Prostate gland (tissue), 2 donors: ENCODE measurements at regions of chr15 and their contacts with region 1.

Region 1: GRCh38 chr15:64740311-64741170 is 34.8 kb downstream of the RBPMS2 start:
- DNase-seq: peak; percentile 46
- H3K4me3 ChIP-seq: no peak overlapping the region
- H3K27ac ChIP-seq: peak overlapping the region; percentile 58 to 64
- H3K4me1 ChIP-seq: peaks cover 3% of the 10 kb centered on the region
- H3K27me3 ChIP-seq: no peaks in the 10 kb centered on the region
- CTCF ChIP-seq: peak in 2 of 4 experiments; percentile 16 to 36
- POLR2A ChIP-seq: no peak

Region 2: DNA sequence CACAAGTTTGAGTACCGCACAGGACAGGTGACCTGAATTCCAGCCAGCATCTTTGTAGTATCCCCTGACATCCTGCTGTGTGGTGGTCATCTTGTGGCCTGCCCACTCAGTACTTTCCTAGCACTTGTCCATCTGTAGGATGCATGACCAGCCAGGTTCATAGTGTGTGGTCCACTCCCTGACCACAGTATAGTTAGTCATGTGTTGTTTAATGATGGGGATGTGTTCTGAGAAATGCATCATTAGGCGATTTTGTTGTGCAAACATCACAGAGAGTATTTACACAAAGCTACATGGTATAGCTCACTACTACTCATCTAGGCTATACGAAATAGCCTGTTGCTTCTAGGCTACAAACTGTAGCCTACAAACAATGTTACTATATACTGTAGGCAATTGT is 51.7 kb after region 1 on chr15:
- intact Hi-C with region 1: no loop called
- DNase-seq: no peak
- H3K4me3 ChIP-seq: no peak overlapping the region
- H3K27ac ChIP-seq: no peak overlapping the region
- H3K4me1 ChIP-seq: no peaks in the 10 kb centered on the region
- H3K27me3 ChIP-seq: no peaks in the 10 kb centered on the region
- CTCF ChIP-seq: no peak
- POLR2A ChIP-seq: no peak

Region 3: GRCh38 chr15:64905119-64905831 is 164.7 kb after region 1 on chr15:
- intact Hi-C with region 1: loop called (anchors 5 kb)
- DNase-seq: peak; percentile 22
- H3K4me3 ChIP-seq: no peak overlapping the region
- H3K27ac ChIP-seq: no peak overlapping the region
- H3K4me1 ChIP-seq: no peaks in the 10 kb centered on the region
- H3K27me3 ChIP-seq: no peaks in the 10 kb centered on the region
- CTCF ChIP-seq: peak; percentile 44 to 75 (median 57)
- POLR2A ChIP-seq: no peak

Region 4: DNA sequence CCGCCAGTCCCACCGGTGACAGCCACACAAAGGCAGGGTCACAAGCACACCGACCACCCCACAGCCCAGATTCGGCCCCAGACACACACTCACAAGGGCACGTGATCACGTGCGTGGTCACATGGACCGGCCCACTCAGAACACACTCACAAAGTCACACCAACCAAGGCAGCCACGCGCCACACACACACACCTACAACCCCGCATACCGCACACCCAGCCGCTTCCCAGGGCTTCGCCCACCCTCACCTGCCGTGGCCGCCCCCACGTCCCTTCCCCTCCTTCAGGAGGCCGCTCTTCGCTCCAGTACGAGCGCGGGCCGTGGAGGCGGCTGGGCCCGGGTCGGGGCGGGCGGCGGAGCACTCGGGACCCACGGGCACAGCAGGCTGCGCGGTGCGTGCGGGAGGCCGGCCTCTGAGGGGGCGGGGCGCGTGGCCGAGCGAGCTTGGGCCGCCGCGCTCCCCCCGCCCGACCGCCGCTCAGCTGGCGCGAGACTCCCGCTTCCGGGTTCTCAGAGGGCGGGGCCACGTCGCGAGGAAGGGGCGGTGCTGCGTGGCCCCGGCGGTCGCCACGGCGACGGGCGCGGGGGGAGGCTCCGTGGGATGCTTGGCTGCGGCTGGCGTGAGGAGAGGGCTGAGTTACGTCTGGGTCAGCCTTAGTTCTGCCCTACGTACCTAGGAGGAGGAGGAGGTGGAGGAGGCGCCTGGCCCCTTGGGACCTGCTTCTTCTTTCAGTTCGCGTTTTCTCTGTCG is 249.1 kb after region 1 on chr15 and contains the start of gene SPG21:
- intact Hi-C with region 1: no loop called
- DNase-seq: peak; percentile 91
- H3K4me3 ChIP-seq: peak within 1 kb of the TSS; percentile 92 to 97
- H3K27ac ChIP-seq: peak within 1 kb of the TSS; percentile 93
- H3K4me1 ChIP-seq: no peaks in the 10 kb centered on the region
- H3K27me3 ChIP-seq: no peaks in the 10 kb centered on the region
- CTCF ChIP-seq: no peak
- POLR2A ChIP-seq: peak; percentile 79
- total RNA-seq, gene SPG21: 95.8 to 98.8 TPM